Naive thymus-derived CD8-positive, alpha-beta T cell (primary cell): ENCODE measurements at regions of chr12 and their contacts with region 1.

Region 1: DNA sequence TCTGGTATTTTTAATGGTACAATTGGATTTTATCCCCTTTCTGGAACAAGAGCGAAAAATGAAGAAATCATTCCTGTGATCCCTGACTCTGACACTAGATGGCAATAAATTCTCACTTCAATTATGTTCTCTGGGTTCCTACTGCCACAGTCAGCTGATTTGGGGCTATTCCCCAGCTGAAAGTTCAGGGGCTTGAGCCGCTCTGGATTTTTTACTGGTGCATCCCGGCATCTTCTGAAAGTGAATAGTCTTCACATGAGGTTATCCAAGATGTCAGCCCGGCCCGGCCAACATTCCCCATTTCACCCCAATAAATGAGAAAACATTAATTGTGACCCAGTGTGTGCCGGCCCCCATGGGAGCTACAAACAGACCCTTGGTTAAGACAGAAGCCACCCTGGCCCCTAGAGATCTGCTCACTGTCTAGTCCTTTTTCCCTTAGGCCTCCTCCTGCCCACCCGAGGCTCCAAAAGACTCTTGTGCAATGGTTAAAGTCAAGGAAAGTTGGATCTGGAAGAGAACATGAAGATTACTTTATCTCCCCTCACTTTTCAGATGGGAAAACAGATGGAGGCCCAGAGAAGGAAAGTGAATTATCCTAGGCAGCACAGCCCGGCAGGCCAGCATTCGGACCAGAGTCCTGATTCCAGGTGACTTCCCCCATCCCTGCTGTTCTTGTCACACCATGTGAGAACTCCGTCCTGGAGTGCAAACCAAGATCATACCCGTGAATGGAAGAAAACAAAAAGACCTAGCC is 20.8 kb downstream of the CKAP4 start:
- DNase-seq: peak in 7 of 10 donors; percentile 10 to 69 (median 38)
- ATAC-seq: peak; percentile 25 to 45
- H3K4me3 Mint-ChIP-seq: peak overlapping the region; percentile 37 to 82 (median 63)
- H3K27ac Mint-ChIP-seq: peak overlapping the region; percentile 86 to 98 (median 94)
- H3K4me1 Mint-ChIP-seq: peaks cover 18 to 27% (median 23%) of the 10 kb centered on the region in 4 donors
- H3K27me3 Mint-ChIP-seq: peaks cover 0 to 5% (median 2%) of the 10 kb centered on the region in 5 donors

Region 2: DNA sequence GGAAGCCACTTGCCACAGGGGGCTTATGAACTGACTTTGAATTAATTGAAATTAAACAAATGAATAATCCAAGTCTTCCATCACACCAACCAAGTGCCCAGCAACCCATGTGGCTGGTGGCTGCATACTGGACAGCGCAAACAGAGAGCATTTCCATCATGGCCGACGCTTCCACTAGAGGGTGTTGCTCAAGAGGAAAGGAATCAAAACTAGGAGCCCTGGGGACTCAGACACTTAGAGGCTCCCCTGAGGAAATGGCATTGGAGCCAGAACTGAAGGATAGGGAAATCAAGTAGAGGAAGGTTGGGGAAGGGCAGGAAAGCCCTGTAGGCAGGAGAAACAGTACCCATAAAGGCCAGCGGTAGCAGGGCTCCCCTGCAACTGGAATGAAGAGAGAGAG is 37.7 kb before region 1 on chr12:
- POLR2A ChIA-PET with region 1: no interaction called
- DNase-seq: no peak
- ATAC-seq: no peak
- H3K4me3 Mint-ChIP-seq: no peak overlapping the region
- H3K27ac Mint-ChIP-seq: no peak overlapping the region
- H3K4me1 Mint-ChIP-seq: no peaks in the 10 kb centered on the region
- H3K27me3 Mint-ChIP-seq: peaks cover 6 to 39% (median 8%) of the 10 kb centered on the region in 5 donors

Region 3: DNA sequence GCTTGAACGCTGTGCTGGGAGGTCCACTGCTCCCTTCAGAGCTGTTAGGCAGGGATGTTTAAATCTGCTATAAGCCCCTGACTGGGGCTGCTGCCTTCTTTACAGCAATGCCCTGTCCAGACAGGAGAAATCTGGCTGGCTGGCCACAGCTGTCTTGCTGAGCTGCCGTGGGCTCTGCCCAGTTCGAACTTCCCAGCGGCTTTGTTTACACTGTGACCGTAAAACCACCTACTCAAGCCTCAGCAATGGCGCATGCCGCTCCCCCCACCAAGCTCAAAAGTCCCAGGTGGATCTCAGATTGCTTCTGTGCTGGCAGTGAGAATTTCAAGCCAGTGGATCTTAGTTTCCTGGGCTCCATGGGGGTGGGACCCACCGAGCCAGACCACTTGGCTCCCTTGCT is 15.1 kb before region 1 on chr12:
- POLR2A ChIA-PET with region 1: no interaction called
- DNase-seq: no peak
- ATAC-seq: no peak
- H3K4me3 Mint-ChIP-seq: no peak overlapping the region
- H3K27ac Mint-ChIP-seq: no peak overlapping the region
- H3K4me1 Mint-ChIP-seq: peaks cover 0 to 1% (median 0%) of the 10 kb centered on the region in 4 donors
- H3K27me3 Mint-ChIP-seq: peaks cover 24 to 47% (median 46%) of the 10 kb centered on the region in 5 donors

Region 4: GRCh38 chr12:106247674-106248311 is 20.7 kb after region 1 on chr12 and contains the start of gene CKAP4:
- POLR2A ChIA-PET with region 1: interaction called, 63 read pairs
- DNase-seq: peak; percentile 38 to 76 (median 60)
- ATAC-seq: peak; percentile 50 to 60
- H3K4me3 Mint-ChIP-seq: peak within 1 kb of the TSS; percentile 75 to 91 (median 86)
- H3K27ac Mint-ChIP-seq: peak within 1 kb of the TSS; percentile 69 to 98 (median 95)
- H3K4me1 Mint-ChIP-seq: peaks cover 17 to 53% (median 43%) of the 10 kb centered on the region in 4 donors
- H3K27me3 Mint-ChIP-seq: no peaks in the 10 kb centered on the region
- polyA plus RNA-seq, gene CKAP4: 11.2 to 11.9 (median 11.2) TPM

Region 5: GRCh38 chr12:106282457-106283097 is 55.5 kb after region 1 on chr12:
- POLR2A ChIA-PET with region 1: interaction called, 27 read pairs
- DNase-seq: peak; percentile 10 to 76 (median 47)
- ATAC-seq: peak; percentile 77 to 79
- H3K4me3 Mint-ChIP-seq: no peak overlapping the region
- H3K27ac Mint-ChIP-seq: peak overlapping the region in 4 of 10 donors; percentile 0 to 84 (median 14)
- H3K4me1 Mint-ChIP-seq: peaks cover 0 to 18% (median 10%) of the 10 kb centered on the region in 4 donors
- H3K27me3 Mint-ChIP-seq: peaks cover 2 to 9% (median 6%) of the 10 kb centered on the region in 5 donors

Region 6: DNA sequence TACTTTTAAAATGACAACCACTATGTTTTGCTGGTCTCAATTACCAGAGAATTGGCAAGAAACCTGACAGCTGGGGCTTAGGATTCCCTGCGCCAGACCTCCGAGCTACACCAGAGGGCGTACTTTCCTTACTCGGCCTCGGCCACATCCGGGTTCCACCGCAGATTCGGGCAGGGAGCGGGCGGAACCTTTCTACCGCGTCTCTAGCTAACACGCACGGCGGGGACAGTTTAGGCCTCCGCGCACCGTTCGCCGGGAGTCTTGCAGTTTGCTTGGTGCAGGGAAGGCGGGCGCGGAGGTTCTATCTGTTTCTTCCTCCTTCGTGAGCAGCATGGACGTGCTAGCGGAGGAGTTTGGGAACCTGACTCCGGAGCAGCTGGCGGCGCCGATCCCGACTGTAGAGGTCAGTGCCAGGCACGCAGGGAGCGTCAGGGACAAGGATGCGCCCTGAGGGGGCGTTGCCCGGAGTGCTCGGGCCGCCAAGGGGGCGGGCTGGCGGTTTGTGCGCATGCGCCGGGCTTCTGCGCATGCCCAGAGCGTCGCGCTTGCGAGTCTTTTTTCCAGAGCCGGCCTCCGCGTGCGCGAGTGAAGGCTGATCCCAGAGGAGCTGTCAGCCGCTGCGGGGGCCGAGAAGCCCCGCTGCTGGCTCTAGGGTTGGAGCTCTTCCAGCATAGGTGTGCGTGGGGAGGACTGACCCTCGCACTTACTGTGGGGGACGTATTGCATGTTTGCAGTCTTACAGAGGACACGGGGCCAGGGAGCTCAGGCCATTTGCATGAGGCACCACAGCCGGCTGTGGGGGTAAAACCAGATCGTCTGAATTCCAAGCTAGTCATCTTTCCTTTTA is 130.7 kb after region 1 on chr12 and contains the start of gene POLR3B:
- POLR2A ChIA-PET with region 1: interaction called, 14 read pairs
- DNase-seq: peak; percentile 90 to 100 (median 96)
- ATAC-seq: peak; percentile 93 to 94
- H3K4me3 Mint-ChIP-seq: peak within 1 kb of the TSS; percentile 82 to 97 (median 93)
- H3K27ac Mint-ChIP-seq: peak within 1 kb of the TSS; percentile 80 to 97 (median 93)
- H3K4me1 Mint-ChIP-seq: peaks cover 10 to 20% (median 19%) of the 10 kb centered on the region in 4 donors
- H3K27me3 Mint-ChIP-seq: peaks cover 0 to 3% (median 0%) of the 10 kb centered on the region in 5 donors
- polyA plus RNA-seq, gene POLR3B: 3.1 to 6.2 (median 4.2) TPM